ENCODE measurements at regions of chr2 and their contacts with region 1.

Region 1: DNA sequence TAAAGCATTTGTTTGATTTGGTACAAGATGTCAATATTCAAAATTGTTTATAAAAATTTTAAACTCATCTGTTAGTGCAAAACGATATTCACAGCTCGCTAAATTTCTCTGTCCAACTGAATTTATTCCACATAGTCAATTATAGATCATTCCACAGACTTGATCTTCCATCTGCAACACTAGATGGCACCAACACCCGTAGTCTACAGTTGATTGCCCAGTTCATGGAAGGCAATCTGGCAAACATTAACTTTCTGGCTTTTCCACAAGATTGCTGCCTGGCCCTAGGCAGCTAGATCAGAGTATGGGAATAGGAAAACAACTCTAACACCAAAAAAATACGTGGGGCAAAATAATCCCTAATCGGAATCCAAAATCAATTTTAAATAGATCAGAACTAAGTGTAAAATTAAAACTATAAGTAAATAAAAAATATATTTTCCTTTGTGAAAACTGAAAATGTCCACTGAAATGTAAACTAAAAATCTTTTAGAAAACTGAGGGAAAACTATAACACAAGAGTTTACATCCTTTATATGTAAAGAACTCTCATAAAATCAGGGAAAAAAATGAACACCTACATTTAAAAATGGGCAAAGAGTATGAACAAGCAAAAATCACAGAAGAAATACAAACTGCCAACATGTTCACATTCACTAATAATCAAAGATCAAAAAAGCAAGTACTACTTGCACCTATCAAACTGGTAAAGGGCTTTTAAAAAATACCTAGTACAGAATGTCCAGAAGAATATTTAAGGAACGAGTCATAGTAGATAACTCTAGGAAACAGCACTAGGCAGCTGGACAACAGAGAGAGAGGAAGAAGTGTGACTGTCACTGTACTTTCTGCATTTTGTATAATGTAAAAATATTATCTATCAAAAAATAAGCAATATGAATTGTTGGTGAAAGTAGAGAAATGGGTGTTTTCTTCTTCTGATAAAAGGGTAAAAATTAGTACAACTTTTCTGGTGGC is 35.0 kb downstream of the RTN4 start:
- DNase-seq: peak; percentile 60
- H3K4me3 Mint-ChIP-seq: no peak overlapping the region
- H3K27ac Mint-ChIP-seq: no peak overlapping the region
- H3K4me1 Mint-ChIP-seq: peaks cover 19% of the 10 kb centered on the region
- H3K27me3 Mint-ChIP-seq: no peaks in the 10 kb centered on the region

Region 2: DNA sequence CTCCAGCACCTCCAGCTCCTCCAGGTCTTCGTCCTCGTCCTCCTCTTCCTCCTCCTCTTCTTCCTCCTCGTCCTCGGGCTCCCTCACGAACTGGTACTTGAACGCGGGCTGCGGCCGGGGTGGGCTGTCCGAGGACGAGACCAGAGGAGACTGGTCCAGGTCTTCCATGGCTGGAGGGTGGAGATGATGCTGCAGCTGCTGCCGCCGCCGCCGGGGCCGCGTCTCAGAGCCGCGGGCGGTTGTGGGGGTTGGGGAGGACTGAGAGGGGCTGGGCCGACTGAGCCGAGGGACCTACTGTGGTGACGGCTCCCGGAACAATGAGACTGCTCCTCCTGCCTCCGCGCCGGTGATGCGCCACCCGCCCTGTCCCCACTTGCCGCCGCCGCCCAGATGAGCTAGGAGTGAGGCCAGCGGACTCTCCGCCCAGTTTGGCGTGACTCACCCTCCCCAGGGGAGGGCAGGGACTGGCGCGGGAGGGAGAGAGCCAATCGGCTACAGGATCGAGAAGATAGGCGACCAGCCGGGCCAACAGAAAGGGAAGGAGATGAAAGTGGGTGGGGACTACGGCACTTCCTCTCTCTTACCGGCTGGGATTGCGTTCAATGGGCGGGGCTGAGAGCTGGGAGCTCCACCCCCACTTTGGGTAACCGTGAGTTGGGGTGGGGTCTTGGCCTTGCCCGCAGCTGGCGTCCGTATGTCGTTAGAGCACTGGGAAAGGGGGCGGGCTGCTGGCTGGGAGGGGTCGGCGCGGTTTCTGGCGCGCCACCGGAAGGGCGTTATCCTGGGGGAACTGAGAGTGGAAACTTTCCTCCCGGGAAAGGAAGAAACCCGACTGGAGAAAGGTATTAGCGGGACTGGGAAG is 35.1 kb after region 1 on chr2 and contains the start of gene RTN4:
- CTCF ChIA-PET with region 1: interaction called, 12 read pairs
- DNase-seq: peak; percentile 99
- H3K4me3 Mint-ChIP-seq: peak within 1 kb of the TSS; percentile 96
- H3K27ac Mint-ChIP-seq: peak within 1 kb of the TSS; percentile 96
- H3K4me1 Mint-ChIP-seq: peaks cover 71% of the 10 kb centered on the region
- H3K27me3 Mint-ChIP-seq: no peaks in the 10 kb centered on the region

Region 3: DNA sequence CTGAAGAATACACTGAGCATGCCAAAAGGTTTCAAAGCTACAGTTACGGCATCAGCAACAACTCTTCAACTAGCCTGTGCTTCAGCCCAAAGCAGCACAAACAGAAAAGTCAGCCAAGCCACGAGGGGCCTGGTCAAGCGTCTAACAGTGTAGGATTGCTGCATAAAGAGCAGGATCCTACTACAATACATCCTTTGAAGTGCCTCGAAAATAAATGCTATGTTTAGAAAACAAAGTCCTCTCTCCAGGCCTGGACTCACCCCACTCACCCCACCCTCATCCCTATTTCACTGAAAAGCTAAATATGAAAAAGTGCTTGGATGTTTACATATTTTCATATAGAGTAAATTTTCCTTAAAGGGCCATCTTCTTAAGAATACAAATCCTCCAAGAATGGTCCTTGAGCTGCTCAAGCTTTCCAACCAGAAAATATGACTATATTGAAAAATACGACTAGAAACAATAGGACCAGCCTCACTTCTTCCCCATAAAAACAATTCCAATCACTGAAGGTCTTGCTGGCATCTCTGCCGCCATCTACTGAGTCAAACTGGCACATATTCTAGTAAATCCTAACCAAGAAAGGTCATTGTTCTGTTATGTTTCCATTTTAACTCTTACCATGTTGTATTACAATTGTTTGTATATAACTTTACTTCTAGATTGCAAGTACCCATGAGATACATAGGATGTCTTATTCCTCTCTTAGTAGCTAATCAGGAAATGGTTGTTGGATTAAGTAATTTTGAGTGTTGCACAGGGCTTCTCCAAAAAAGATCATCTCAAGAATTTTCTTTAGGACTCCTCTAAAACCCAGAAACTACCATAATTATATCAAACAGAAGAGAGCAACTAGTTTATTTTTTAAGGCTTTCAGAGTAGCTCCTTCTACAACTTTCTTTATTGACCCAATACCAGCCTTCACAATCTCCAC is 153.2 kb after region 1 on chr2:
- CTCF ChIA-PET with region 1: interaction called, 20 read pairs
- DNase-seq: peak; percentile 57
- H3K4me3 Mint-ChIP-seq: no peak overlapping the region
- H3K27ac Mint-ChIP-seq: no peak overlapping the region
- H3K4me1 Mint-ChIP-seq: no peaks in the 10 kb centered on the region
- H3K27me3 Mint-ChIP-seq: no peaks in the 10 kb centered on the region

Region 4: DNA sequence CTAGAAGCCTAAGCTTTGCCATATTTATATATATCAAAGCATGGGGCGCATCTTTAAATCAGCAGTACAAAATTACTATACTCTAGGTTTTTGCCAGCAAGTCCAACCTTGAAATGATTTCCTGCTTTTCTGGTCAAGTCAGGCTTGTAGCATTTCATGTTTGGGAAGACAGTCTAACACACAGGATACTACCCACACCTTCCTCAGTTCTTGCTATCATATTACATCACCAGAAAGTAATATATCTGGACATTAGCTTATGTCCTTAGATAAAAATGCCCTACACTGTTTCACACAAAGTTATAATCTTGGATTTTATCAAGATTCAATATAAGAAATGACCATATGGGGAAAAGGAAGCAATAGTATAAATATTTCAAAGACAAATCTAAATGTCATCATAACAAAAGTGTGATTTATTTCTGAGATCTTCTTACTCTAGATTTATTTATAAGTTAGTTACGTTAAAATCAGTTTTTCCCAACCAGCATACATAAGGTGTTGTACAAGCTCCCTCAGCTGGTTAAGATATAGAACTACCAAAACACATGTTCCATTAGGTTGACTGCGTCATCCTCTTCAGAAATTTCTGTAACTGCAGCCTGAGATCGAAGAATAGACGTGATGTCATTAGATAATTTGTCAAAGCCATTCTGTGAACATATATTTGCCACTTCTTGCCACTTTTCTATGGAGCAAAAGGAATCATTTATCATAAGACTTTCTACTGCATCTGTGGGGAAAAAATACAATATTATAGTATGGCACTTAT is 160.2 kb after region 1 on chr2:
- CTCF ChIA-PET with region 1: interaction called, 10 read pairs
- DNase-seq: no peak
- H3K4me3 Mint-ChIP-seq: no peak overlapping the region
- H3K27ac Mint-ChIP-seq: peak overlapping the region; percentile 2
- H3K4me1 Mint-ChIP-seq: no peaks in the 10 kb centered on the region
- H3K27me3 Mint-ChIP-seq: no peaks in the 10 kb centered on the region

Measured in activated naive CD4-positive, alpha-beta T cell treated with anti-CD3 and anti-CD28 coated beads, Interleukin-2, amount 10 ng/mL, durations not matched to agents 7 days and 5 days (primary cell).